HEK293 (cell line): ENCODE measurements at regions of chr21 and their contacts with region 1.

Region 1: DNA sequence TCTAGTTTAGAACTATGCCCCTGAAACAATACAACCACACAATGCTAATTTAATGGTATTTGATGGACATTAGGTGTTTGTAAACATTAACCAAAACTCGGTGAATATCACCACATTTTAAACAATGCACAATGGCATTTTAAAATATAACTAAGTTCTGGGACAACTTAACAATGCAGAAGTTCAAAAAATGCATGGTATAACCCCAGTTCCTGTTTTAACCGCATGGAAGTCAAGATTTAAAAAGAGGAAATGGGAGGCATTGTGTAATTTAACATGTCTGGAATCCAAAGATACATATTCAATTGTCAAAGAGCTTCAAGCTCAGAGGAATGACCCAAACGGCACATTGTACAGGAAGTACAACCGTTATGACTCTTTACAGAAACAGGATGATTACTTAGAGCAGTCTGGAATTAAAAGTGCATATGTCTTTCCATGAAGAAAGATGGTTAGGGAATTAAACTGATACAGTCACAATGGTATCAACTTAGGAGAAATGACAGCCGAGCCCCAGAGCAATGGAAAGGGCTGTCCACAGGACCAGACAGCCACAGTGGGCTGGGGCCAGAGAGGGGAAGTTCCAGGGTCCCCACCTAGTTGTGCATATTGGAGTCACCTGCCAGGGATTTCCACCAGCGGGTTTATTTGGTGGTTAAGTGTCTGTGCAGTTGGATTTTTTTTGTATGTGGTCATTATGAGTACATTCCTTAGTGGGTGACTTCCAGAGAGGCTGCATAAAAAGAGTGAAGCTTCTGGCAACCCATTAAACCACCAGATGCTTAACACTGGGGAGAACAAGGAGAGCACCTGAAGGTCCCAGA is 7.5 kb upstream of the PTTG1IP start:
- H3K4me3 ChIP-seq: no peak overlapping the region
- H3K27ac ChIP-seq: no peak overlapping the region
- H3K4me1 ChIP-seq: no peaks in the 10 kb centered on the region
- CTCF ChIP-seq: no peak

Region 2: DNA sequence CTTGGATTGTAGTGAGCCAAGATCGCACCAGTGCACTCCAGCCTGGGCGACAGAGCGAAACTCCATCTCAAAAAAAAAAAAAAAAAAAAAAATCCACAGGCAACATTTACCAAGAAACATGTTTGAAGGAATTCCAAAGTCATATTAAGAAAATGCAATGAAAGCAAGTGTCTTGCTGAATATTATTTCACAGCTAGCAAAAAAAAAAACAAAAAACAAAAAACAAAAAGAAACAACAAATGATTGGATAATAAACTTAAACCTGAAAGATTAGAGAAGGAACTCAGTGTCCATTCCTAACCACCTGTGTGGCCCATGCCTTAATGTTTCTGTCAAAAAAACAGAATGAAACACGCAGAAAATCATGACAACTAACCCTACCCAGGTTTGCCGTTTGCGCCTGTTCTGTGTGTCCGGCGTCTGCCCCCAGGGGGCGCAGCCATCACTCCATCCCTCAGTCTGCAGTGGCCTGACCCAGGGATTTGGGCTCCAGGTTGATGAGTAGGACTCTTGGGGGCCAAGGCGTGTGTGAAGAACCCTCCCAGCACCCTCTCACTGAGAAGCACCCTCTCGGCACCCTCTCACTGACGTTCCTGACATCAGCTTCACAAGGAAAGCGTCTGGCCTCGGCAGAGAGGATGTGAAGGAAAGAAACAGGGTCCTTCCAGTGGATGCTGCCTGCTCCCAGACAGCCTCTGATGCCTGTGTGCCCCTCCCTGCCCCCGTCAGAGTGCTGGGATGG is 11.7 kb after region 1 on chr21:
- CTCF ChIA-PET with region 1: interaction called, 25 read pairs
- POLR2A ChIA-PET with region 1: no interaction called
- H3K4me3 ChIP-seq: no peak overlapping the region
- H3K27ac ChIP-seq: no peak overlapping the region
- H3K4me1 ChIP-seq: no peaks in the 10 kb centered on the region
- CTCF ChIP-seq: peak; percentile 84